Head of caudate nucleus (tissue), 42 donors: ENCODE measurements at regions of chr9 and their contacts with region 1.

Region 1: GRCh38 chr9:98146101-98146991 is 27.3 kb upstream of the TRIM14 start:
- DNase-seq: peak in 3 of 42 donors; percentile 11 to 43 (median 15)

Region 2: DNA sequence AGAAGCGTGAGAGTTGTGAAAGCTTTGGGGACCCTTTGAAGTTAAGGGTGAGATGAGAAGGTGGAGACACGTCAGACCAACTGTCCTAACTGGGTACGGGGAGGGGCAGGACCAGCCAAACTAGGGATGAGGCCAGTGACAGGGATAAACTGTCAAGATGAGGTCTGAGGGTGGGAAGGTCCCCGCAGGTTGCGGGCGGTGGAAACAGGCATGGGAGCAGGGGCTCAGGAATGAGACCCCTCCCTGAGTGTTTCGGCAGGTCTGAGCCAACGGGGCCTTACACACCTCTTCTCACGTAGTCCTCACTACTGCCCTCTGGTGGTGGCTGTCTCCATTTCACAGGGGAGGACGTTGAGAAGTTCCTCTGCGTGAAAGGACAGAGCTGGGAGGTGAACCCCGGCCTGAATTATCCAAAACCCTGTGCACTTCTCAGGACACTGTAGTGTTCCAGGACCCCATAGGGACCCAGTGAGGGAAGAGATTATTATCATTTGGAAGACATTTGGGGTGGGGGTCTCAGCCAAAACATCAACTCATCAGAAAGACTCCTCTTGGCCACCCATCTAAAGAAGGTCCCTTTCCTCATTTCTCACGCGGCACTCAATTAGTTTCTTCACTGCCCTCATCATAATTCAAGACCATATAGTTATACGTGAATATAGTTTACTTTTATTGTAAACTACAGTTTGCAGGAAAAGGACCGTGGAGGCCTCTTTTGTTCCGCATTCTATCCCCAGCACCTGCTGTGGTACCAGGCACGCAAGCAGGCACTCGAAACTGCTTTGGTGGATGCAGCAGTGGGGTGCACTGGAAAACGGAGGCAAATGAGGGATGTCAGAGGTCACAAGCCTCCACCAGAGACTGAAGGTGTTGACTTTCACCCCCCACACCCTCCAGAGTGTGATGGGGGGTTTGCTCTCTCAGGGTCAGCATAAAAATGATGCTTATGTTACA is 111.5 kb before region 1 on chr9:
- intact Hi-C with region 1: no loop called
- DNase-seq: peak; percentile 66 to 95 (median 86)

Region 3: GRCh38 chr9:98087420-98088354 is 58.7 kb before region 1 on chr9:
- intact Hi-C with region 1: loop called (anchors 10 kb)
- DNase-seq: peak in 29 of 42 donors; percentile 18 to 65 (median 43)